ENCODE measurements at regions of chr19 and their contacts with region 1.

Region 1: DNA sequence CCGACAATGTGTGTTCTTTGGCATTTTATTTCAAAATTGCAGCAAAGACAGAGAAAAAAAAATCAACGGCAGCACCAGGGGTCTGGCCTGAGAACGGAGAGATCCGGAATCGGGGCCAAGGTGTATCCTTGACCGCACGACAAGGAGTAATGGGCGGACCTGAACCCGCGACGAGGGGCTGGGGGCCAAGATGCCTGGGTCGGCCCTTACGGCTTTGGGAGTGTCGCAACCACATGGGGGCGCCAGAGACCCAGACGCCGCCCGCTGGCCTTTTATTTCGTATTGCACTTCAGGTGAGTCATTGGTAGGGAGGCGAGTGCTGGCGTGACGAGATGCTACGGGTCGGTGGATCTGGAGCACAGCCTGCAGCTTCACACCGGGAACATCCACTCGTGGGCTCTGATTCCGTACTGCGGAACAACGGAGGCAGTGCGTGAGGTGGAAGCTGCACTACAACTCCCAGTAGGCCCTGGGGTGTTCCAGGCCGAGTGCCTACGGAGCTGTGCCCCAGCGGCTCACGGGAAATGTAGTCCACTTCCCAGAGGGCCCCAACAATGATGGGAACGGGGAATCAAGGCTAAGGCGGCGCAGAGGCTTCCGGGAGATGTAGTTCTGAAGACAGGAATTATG is 15.7 kb downstream of the BCAT2 start:
- DNase-seq: peak; percentile 72 to 87 (median 84)
- ATAC-seq: peak; percentile 99
- H3K4me3 ChIP-seq: peak overlapping the region; percentile 96
- H3K4me3 Mint-ChIP-seq: peak overlapping the region; percentile 74 to 99 (median 94)
- H3K27ac ChIP-seq: peak overlapping the region; percentile 67
- H3K27ac Mint-ChIP-seq: peak overlapping the region; percentile 83 to 95 (median 93)
- H3K4me1 ChIP-seq: peaks cover 4 to 6% of the 10 kb centered on the region in 2 donors
- H3K4me1 Mint-ChIP-seq: peaks cover 5 to 13% (median 7%) of the 10 kb centered on the region in 7 donors
- H3K27me3 ChIP-seq: no peaks in the 10 kb centered on the region
- H3K27me3 Mint-ChIP-seq: no peaks in the 10 kb centered on the region

Region 2: DNA sequence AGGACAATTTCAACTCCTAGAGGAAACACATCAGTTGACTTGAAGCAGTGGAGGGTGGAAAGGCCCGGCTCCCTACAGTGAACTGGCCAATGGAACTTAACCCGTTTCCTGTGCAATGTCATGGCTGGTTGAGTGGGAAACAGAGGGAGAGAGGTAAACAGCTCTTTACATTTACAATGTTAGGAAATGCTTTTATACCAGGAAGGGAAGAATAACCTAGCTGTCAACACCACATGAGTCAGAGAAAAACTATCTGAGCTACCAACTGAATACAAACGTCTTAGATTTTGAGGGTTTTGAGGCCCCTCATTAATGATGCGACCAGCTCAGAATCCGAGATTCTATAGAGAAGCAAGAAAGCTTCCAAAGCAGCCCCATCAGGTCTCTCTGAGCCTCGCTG is 576.2 kb before region 1 on chr19:
- CTCF ChIA-PET with region 1: no interaction called
- POLR2A ChIA-PET with region 1: no interaction called
- intact Hi-C with region 1: no loop called
- DNase-seq: no peak
- ATAC-seq: no peak
- H3K4me3 ChIP-seq: no peak overlapping the region
- H3K4me3 Mint-ChIP-seq: no peak overlapping the region
- H3K27ac ChIP-seq: no peak overlapping the region
- H3K27ac Mint-ChIP-seq: peak overlapping the region in 4 of 9 donors; percentile 7 to 77 (median 35)
- H3K4me1 ChIP-seq: no peaks in the 10 kb centered on the region
- H3K4me1 Mint-ChIP-seq: peaks cover 0 to 25% (median 4%) of the 10 kb centered on the region in 7 donors
- H3K27me3 ChIP-seq: no peaks in the 10 kb centered on the region
- H3K27me3 Mint-ChIP-seq: no peaks in the 10 kb centered on the region

Region 3: DNA sequence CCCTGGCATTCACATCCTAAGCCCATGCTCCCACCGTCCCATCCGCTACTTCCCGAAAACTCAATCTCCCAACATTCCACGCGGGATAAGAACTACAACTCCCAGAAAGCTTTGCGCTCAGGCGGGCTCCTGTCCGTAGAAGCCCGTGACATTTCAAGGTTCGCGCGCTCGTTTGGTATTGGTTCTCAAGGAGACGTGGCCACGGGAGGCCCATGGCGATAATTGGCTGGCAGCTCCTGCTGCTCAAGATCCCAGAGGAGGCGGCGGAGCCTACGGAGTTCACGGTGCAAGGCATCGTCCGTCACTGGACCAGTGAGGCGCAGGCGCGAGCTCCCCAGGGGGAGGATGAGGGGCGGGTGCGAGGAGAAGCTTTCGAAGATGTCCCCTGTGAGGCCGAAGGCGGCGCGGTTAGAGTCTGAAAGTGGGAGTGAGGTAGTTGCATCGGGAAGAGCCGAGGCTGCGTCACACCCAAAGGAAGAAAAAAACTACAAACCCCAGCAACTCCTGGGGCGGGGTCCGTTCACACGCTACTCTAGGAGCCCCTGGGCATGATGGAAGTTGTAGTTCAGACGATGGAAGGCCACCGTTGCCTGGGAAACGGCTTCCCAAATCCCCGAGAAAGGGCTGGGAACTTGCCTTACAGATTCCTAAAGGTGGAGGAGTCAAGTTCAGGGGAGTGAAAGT is 74.4 kb before region 1 on chr19:
- CTCF ChIA-PET with region 1: no interaction called
- POLR2A ChIA-PET with region 1: no interaction called
- intact Hi-C with region 1: no loop called
- DNase-seq: peak; percentile 77 to 93 (median 89)
- ATAC-seq: peak; percentile 91
- H3K4me3 ChIP-seq: peak overlapping the region; percentile 92
- H3K4me3 Mint-ChIP-seq: peak overlapping the region; percentile 80 to 99 (median 97)
- H3K27ac ChIP-seq: peak overlapping the region; percentile 80
- H3K27ac Mint-ChIP-seq: peak overlapping the region; percentile 98 to 100 (median 99)
- H3K4me1 ChIP-seq: peaks cover 5 to 17% of the 10 kb centered on the region in 2 donors
- H3K4me1 Mint-ChIP-seq: peaks cover 19 to 30% (median 25%) of the 10 kb centered on the region in 7 donors
- H3K27me3 ChIP-seq: no peaks in the 10 kb centered on the region
- H3K27me3 Mint-ChIP-seq: no peaks in the 10 kb centered on the region

Region 4: DNA sequence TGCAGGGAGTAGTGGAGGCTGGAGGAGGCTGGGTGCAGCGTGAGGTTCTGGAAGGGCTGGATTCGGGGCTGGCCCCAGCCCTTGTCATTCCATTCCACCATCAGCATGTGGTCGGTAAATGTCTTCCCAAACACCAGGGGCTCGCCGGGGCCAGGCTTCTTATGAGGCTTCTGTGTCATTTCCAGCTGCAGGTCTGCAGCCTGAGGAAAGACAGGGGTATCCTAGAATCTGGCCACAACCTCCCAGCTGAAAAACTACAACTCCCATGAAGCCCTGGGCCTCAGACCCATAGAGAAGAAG is 11.3 kb after region 1 on chr19:
- CTCF ChIA-PET with region 1: interaction called, 18 read pairs
- POLR2A ChIA-PET with region 1: interaction called, 6 read pairs
- intact Hi-C with region 1: loop called (anchors 1 to 2 kb)
- DNase-seq: peak in 6 of 9 donors; percentile 26 to 63 (median 47)
- ATAC-seq: peak; percentile 76
- H3K4me3 ChIP-seq: no peak overlapping the region
- H3K4me3 Mint-ChIP-seq: peak overlapping the region in 2 of 10 donors; percentile 17 to 36
- H3K27ac ChIP-seq: no peak overlapping the region
- H3K27ac Mint-ChIP-seq: peak overlapping the region in 4 of 9 donors; percentile 26 to 49 (median 37)
- H3K4me1 ChIP-seq: peaks cover 10% of the 10 kb centered on the region in 2 donors
- H3K4me1 Mint-ChIP-seq: peaks cover 11 to 29% (median 26%) of the 10 kb centered on the region in 7 donors
- H3K27me3 ChIP-seq: no peaks in the 10 kb centered on the region
- H3K27me3 Mint-ChIP-seq: no peaks in the 10 kb centered on the region

Region 5: GRCh38 chr19:48835734-48836088 is 40.5 kb after region 1 on chr19:
- CTCF ChIA-PET with region 1: interaction called, 100 read pairs
- POLR2A ChIA-PET with region 1: interaction called, 5 read pairs
- intact Hi-C with region 1: loop called (anchors 1 kb)
- DNase-seq: peak; percentile 81 to 93 (median 89)
- ATAC-seq: peak; percentile 95
- H3K4me3 ChIP-seq: peak overlapping the region; percentile 53
- H3K4me3 Mint-ChIP-seq: peak overlapping the region; percentile 85 to 94 (median 90)
- H3K27ac ChIP-seq: peak overlapping the region; percentile 54
- H3K27ac Mint-ChIP-seq: peak overlapping the region; percentile 48 to 96 (median 86)
- H3K4me1 ChIP-seq: peaks cover 12 to 16% of the 10 kb centered on the region in 2 donors
- H3K4me1 Mint-ChIP-seq: peaks cover 16 to 25% (median 23%) of the 10 kb centered on the region in 7 donors
- H3K27me3 ChIP-seq: peaks cover 0 to 5% of the 10 kb centered on the region in 2 donors
- H3K27me3 Mint-ChIP-seq: peaks cover 0 to 11% (median 0%) of the 10 kb centered on the region in 5 donors

Region 6: DNA sequence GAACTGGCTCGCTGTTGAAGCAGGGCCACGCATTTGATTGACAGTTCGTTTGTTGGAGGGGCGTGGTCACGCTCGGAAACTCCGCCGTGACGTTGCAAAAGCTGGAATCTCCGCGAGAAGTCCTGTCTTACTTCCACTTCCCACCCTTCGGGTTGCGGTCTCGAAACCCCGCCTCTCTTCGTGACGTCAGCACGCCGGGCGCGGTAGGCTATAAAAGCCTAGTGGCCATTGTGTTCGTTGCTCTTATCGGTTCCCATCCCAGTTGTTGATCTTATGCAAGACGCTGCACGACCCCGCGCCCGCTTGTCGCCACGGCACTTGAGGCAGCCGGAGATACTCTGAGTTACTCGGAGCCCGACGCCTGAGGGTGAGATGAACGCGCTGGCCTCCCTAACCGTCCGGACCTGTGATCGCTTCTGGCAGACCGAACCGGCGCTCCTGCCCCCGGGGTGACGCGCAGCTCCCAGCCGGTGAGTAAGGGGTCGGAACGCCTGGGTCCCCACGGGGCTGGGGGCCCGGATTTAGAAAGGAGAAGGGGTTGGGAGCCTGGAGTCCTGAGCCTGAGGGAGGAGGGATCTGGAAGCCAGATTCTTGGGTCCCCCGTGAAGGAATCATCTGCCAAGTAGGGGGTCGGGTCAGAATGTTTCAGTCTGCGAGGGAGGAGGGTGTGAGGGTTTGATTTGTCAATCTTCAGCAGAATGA is 77.2 kb after region 1 on chr19 and contains the start of gene PPP1R15A:
- CTCF ChIA-PET with region 1: no interaction called
- POLR2A ChIA-PET with region 1: interaction called, 3 read pairs
- intact Hi-C with region 1: loop called in 1 of 2 experiments (anchors 2 kb)
- DNase-seq: peak; percentile 96 to 99 (median 98)
- ATAC-seq: peak; percentile 58
- H3K4me3 ChIP-seq: peak within 1 kb of the TSS; percentile 86
- H3K4me3 Mint-ChIP-seq: peak within 1 kb of the TSS; percentile 94 to 100 (median 98)
- H3K27ac ChIP-seq: peak within 1 kb of the TSS; percentile 99
- H3K27ac Mint-ChIP-seq: peak within 1 kb of the TSS; percentile 94 to 100 (median 99)
- H3K4me1 ChIP-seq: peaks cover 34 to 36% of the 10 kb centered on the region in 2 donors
- H3K4me1 Mint-ChIP-seq: peaks cover 31 to 51% (median 41%) of the 10 kb centered on the region in 7 donors
- H3K27me3 ChIP-seq: no peaks in the 10 kb centered on the region
- H3K27me3 Mint-ChIP-seq: peaks cover 0 to 14% (median 0%) of the 10 kb centered on the region in 5 donors
- total RNA-seq, gene PPP1R15A: 31.5 to 1,030 (median 71.9) TPM

Region 7: GRCh38 chr19:48965040-48965805 is 170.1 kb after region 1 on chr19 and contains the start of gene FTL:
- CTCF ChIA-PET with region 1: interaction called, 20 read pairs
- POLR2A ChIA-PET with region 1: interaction called, 12 read pairs
- intact Hi-C with region 1: loop called in 1 of 2 experiments (anchors 1 kb)
- DNase-seq: peak; percentile 77 to 93 (median 84)
- ATAC-seq: peak; percentile 85
- H3K4me3 ChIP-seq: peak within 1 kb of the TSS; percentile 86
- H3K4me3 Mint-ChIP-seq: peak within 1 kb of the TSS; percentile 94 to 100 (median 99)
- H3K27ac ChIP-seq: peak within 1 kb of the TSS; percentile 73
- H3K27ac Mint-ChIP-seq: peak within 1 kb of the TSS; percentile 93 to 100 (median 97)
- H3K4me1 ChIP-seq: peaks cover 30 to 37% of the 10 kb centered on the region in 2 donors
- H3K4me1 Mint-ChIP-seq: peaks cover 42 to 69% (median 62%) of the 10 kb centered on the region in 7 donors
- H3K27me3 ChIP-seq: no peaks in the 10 kb centered on the region
- H3K27me3 Mint-ChIP-seq: no peaks in the 10 kb centered on the region
- total RNA-seq, gene FTL: 888 to 1,929 (median 1,286) TPM

Region 8: DNA sequence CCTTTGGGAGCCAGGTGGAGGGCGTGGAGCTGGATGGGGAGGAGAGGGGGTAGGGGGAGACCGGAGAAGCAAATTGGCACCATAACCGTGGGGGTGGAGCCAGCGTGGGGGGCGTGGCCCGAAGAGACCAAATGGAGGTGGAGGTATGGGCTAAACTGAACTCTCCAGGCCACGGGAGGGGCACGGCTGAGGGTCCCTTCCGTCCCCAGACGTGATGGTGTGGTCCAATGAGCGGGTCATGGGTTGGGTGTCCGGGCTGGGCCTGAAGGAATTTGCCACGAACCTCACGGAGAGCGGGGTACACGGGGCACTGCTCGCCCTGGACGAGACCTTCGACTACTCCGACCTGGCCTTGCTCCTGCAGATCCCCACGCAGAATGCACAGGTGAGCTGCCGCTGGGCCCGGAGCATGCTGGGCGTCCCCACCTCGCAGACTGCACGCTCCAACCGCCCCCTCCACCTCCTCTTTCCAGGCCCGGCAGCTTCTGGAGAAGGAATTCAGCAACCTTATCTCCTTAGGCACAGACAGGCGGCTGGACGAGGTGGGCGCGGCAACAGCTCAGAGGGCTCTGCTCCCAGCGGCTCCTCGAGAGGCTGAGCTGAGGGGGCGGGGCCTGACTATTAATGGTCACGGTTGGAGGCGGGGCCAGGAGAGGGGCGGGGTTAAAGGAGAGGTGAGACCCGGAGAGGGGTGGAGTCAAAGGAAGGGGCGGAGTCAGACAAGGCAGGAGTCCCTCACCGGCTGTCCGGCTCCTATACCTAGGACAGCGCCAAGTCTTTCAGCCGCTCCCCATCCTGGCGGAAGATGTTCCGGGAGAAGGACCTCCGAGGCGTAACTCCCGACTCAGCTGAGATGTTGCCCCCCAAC is 353.8 kb after region 1 on chr19:
- CTCF ChIA-PET with region 1: no interaction called
- POLR2A ChIA-PET with region 1: no interaction called
- intact Hi-C with region 1: loop called in 1 of 2 experiments (anchors 10 kb)
- DNase-seq: peak; percentile 39 to 83 (median 59)
- ATAC-seq: peak; percentile 75
- H3K4me3 ChIP-seq: peak overlapping the region; percentile 52
- H3K4me3 Mint-ChIP-seq: peak overlapping the region; percentile 32 to 88 (median 76)
- H3K27ac ChIP-seq: no peak overlapping the region
- H3K27ac Mint-ChIP-seq: no peak overlapping the region
- H3K4me1 ChIP-seq: peaks cover 8 to 35% of the 10 kb centered on the region in 2 donors
- H3K4me1 Mint-ChIP-seq: peaks cover 16 to 43% (median 35%) of the 10 kb centered on the region in 7 donors
- H3K27me3 ChIP-seq: peaks cover 8 to 29% of the 10 kb centered on the region in 2 donors
- H3K27me3 Mint-ChIP-seq: peaks cover 59 to 71% (median 61%) of the 10 kb centered on the region in 5 donors